K562 (cell line): ENCODE measurements at regions of chr20 and their contacts with region 1.

Region 1: GRCh38 chr20:47013607-47014006 is 119.0 kb downstream of the EYA2 start:
- DNase-seq: no peak
- ATAC-seq: no peak
- H3K4me3 ChIP-seq: no peak overlapping the region
- H3K27ac ChIP-seq: no peak overlapping the region
- H3K4me1 ChIP-seq: no peaks in the 10 kb centered on the region
- H3K27me3 ChIP-seq: peaks cover 0 to 16% of the 10 kb centered on the region in 2 experiments; a peak in 1 of 5 replicates
- CTCF ChIP-seq: peak; percentile 16 to 62 (median 36); a peak in 3 of 6 replicates
- EP300 ChIP-seq: no peak
- POLR2A ChIP-seq: no peak
- RAD21 ChIP-seq: peak in 1 of 2 experiments; percentile 47; a peak in 1 of 4 replicates

Region 2: GRCh38 chr20:46767127-46767761 is 246.4 kb before region 1 on chr20:
- CTCF ChIA-PET with region 1: no interaction called
- POLR2A ChIA-PET with region 1: no interaction called
- in situ Hi-C with region 1: no loop called
- intact Hi-C with region 1: loop called (anchors 5 kb)
- DNase-seq: peak; percentile 54 to 77 (median 66)
- ATAC-seq: peak; percentile 86
- H3K4me3 ChIP-seq: no peak overlapping the region
- H3K27ac ChIP-seq: no peak overlapping the region
- H3K4me1 ChIP-seq: no peaks in the 10 kb centered on the region
- H3K27me3 ChIP-seq: peaks cover 12 to 31% of the 10 kb centered on the region in 2 experiments
- CTCF ChIP-seq: peak; percentile 62 to 84 (median 73)
- EP300 ChIP-seq: no peak
- POLR2A ChIP-seq: no peak
- RAD21 ChIP-seq: peak in 1 of 2 experiments; percentile 49; a peak in 2 of 4 replicates